Activated T-helper 1 cell treated with anti-CD3 and anti-CD28 coated beads, Interleukin-12 subunit alpha, Interleukin-12 subunit beta, Interleukin-2, Interleukin-4 antibody, amounts not matched to agents 30 ng/mL and 10 ng/mL and 1 ng/mL, durations not matched to agents 14 hours and 24 hours and 36 hours (primary cell): ENCODE measurements at regions of chr15 and their contacts with region 1.

Region 1: GRCh38 chr15:81265944-81266775 is 57.8 kb downstream of the STARD5 start:
- DNase-seq: peak; percentile 71
- H3K4me3 Mint-ChIP-seq: peak overlapping the region; percentile 30
- H3K27ac Mint-ChIP-seq: peak overlapping the region; percentile 56
- H3K4me1 Mint-ChIP-seq: peaks cover 36% of the 10 kb centered on the region
- H3K27me3 Mint-ChIP-seq: peaks cover 14% of the 10 kb centered on the region

Region 2: GRCh38 chr15:80455668-80456442 is 810.3 kb before region 1 on chr15:
- intact Hi-C with region 1: loop called (anchors 1 kb)
- DNase-seq: peak; percentile 25
- H3K4me3 Mint-ChIP-seq: no peak overlapping the region
- H3K27ac Mint-ChIP-seq: no peak overlapping the region
- H3K4me1 Mint-ChIP-seq: peaks cover 4% of the 10 kb centered on the region
- H3K27me3 Mint-ChIP-seq: peaks cover 7% of the 10 kb centered on the region

Region 3: DNA sequence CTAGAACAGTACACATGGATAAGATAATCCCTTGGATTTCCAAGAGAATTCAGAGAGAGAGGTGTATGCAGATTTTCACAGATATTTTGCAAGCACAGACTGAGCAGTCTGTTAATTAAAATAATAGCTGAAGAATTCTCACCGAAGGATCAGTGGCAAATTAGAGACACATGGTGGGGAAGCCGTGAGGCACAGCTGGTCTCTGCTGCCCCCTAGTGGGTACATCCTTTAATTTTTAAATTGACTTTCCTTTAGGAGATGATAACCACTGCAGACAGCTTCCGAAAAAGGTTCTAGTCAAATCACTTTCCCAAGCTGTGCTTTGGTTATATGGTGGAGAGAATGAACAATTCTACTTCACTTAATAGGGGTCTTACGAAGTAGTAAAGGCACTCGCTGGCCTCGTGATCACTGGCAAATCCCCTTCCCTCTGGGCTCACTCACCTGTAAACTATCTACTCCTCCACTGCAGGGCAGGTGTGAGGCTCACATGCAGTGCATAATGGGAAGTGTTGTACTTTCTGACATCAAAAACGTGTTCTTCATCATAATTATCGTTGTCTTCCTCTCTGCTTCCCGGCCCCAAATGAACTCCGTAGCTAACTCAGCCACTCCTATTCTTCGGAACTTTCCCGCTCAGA is 296.0 kb before region 1 on chr15:
- intact Hi-C with region 1: loop called (anchors 2 kb)
- DNase-seq: peak; percentile 28
- H3K4me3 Mint-ChIP-seq: no peak overlapping the region
- H3K27ac Mint-ChIP-seq: no peak overlapping the region
- H3K4me1 Mint-ChIP-seq: no peaks in the 10 kb centered on the region
- H3K27me3 Mint-ChIP-seq: no peaks in the 10 kb centered on the region

Region 4: GRCh38 chr15:81000624-81001151 is 265.5 kb before region 1 on chr15 and contains the start of gene TLNRD1:
- intact Hi-C with region 1: loop called (anchors 1 kb)
- DNase-seq: peak; percentile 89
- H3K4me3 Mint-ChIP-seq: peak within 1 kb of the TSS; percentile 97
- H3K27ac Mint-ChIP-seq: peak within 1 kb of the TSS; percentile 98
- H3K4me1 Mint-ChIP-seq: peaks cover 62% of the 10 kb centered on the region
- H3K27me3 Mint-ChIP-seq: peaks cover 2% of the 10 kb centered on the region
- total RNA-seq, gene TLNRD1: 30.2 and 30.8 TPM in 2 replicates

Region 5: GRCh38 chr15:81155375-81156218 is 110.6 kb before region 1 on chr15:
- intact Hi-C with region 1: loop called (anchors 1 kb)
- DNase-seq: no peak
- H3K4me3 Mint-ChIP-seq: no peak overlapping the region
- H3K27ac Mint-ChIP-seq: no peak overlapping the region
- H3K4me1 Mint-ChIP-seq: peaks cover 6% of the 10 kb centered on the region
- H3K27me3 Mint-ChIP-seq: peaks cover 17% of the 10 kb centered on the region